ENCODE measurements at regions of chr12 and their contacts with region 1.

Region 1: GRCh38 chr12:47296828-47297227 is 217.1 kb upstream of the AMIGO2 start:
- DNase-seq: no peak
- ATAC-seq: no peak
- H3K4me3 Mint-ChIP-seq: no peak overlapping the region
- H3K27ac Mint-ChIP-seq: no peak overlapping the region
- H3K4me1 Mint-ChIP-seq: peaks cover 18% of the 10 kb centered on the region
- H3K27me3 Mint-ChIP-seq: no peaks in the 10 kb centered on the region
- CTCF ChIP-seq: no peak

Region 2: GRCh38 chr12:47095446-47096236 is 201.2 kb before region 1 on chr12:
- CTCF ChIA-PET with region 1: no interaction called
- POLR2A ChIA-PET with region 1: no interaction called
- intact Hi-C with region 1: no loop called
- DNase-seq: no peak
- ATAC-seq: no peak
- H3K4me3 Mint-ChIP-seq: no peak overlapping the region
- H3K27ac Mint-ChIP-seq: no peak overlapping the region
- H3K4me1 Mint-ChIP-seq: no peaks in the 10 kb centered on the region
- H3K27me3 Mint-ChIP-seq: no peaks in the 10 kb centered on the region
- CTCF ChIP-seq: no peak

Region 3: DNA sequence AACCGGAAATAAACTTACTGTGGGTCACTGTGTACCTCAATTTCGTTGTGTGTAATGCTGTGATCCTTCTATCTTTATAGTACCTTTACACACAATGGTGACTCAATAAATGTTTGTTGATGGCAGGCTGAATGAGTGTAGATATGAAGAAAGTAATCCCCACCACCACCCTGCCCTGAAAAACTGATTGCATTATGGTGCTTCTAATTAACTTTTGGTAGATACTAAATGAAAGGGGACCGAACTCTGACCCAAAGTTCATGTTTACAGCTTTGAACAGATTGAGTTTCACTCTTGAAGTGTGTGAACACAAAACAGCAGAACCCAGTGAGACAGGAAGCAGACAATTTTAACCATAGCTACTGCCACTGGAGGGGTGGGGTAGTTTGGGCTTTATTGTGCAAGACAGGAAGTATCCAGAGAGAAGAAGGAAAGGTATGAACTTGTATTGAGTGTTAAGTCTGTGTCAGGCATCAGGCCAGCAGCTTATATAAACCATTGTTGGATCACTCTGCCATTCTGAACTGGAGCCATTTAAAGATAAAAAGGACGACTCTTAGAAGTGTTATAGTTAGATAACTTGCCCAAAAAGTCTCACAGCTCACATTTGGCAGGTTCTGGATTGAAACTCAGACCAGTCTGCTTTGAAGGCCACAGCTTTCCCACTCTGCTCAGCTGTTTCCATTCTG is 20.1 kb before region 1 on chr12:
- CTCF ChIA-PET with region 1: no interaction called
- POLR2A ChIA-PET with region 1: interaction called, 18 read pairs
- intact Hi-C with region 1: no loop called
- DNase-seq: no peak
- ATAC-seq: peak; percentile 86
- H3K4me3 Mint-ChIP-seq: peak overlapping the region; percentile 46
- H3K27ac Mint-ChIP-seq: peak overlapping the region; percentile 85
- H3K4me1 Mint-ChIP-seq: peaks cover 62% of the 10 kb centered on the region
- H3K27me3 Mint-ChIP-seq: no peaks in the 10 kb centered on the region
- CTCF ChIP-seq: no peak

Measured in activated B cell treated with CpG ODN at 0.5 μM for 24 hours (primary cell).